Mammary epithelial cell (primary cell): ENCODE measurements at regions of chr13 and their contacts with region 1.

Region 1: DNA sequence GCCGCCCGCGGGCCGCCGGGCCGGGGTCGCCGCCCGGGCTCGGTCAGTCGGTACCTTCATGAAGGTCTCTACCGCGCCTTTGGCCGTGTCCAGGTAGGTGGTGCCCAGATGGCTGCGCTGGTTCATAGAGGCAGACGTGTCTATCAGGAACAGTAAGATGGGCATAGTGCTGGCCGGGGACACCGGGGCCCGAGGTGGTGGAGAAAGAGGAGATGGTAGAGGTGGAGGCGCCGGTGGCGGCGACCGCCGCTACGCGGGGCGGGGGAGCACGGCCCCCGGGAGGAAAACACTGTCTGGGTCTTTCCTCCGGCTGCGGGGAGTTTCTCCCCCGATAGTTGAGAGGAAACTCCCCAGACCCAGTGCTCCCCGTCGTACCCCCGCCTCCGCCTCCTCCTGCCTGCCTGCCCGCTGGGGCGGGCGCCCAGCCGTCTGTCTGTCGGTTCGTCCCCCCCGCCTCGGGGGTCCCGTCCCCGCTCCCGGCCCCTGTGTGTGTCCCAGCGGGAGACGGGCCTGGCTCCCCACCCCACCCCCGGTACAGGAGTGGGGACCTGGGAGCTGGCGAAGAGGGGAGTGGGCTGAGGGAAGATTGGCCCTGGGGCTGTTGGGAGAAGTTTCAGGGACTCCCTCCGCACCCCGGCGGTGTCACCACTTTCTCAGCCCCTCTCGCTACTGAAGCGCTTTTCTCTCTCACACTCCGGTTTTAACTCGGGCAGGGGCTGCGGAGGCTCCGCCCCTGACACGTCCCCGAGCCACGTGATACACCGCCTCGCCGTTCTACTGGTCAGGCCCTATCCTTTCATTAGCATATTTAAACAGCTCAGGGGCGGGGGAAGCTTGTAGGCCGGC is at the start of gene INTS6:
- DNase-seq: peak; percentile 99
- H3K4me3 ChIP-seq: peak within 1 kb of the TSS; percentile 73 to 94 (median 89)
- H3K27ac ChIP-seq: peak within 1 kb of the TSS; percentile 86
- H3K4me1 ChIP-seq: peaks cover 4% of the 10 kb centered on the region
- H3K27me3 ChIP-seq: no peaks in the 10 kb centered on the region
- CTCF ChIP-seq: no peak
- total RNA-seq, gene INTS6: 57.8 to 65.7 TPM

Region 2: GRCh38 chr13:51435002-51435578 is 17.5 kb before region 1 on chr13:
- CTCF ChIA-PET with region 1: no interaction called
- dilution Hi-C with region 1: no loop called
- in situ Hi-C with region 1: no loop called
- intact Hi-C with region 1: loop called (anchors 2 kb)
- DNase-seq: no peak
- H3K4me3 ChIP-seq: no peak overlapping the region
- H3K27ac ChIP-seq: no peak overlapping the region
- H3K4me1 ChIP-seq: no peaks in the 10 kb centered on the region
- H3K27me3 ChIP-seq: no peaks in the 10 kb centered on the region
- CTCF ChIP-seq: peak; percentile 53 to 60

Region 3: DNA sequence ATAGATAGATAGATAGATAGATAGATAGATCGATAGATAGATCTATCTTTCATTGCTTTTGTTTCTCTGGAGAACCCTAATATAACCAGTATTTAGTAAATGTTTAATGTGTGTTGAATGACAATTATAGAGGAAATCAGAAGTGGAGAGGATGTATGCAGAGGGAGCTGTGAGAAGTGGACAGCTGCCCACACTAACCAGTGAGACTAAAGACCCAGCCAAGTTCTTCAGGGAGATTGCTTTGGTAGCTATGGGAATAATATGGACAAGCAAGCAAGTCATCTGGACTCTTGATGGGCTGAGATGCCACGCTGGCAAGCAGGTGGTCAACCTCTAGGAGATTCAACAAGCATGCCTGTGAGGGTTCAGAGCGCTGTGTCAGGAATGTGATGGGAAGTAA is 15.1 kb after region 1 on chr13:
- CTCF ChIA-PET with region 1: no interaction called
- dilution Hi-C with region 1: no loop called
- in situ Hi-C with region 1: no loop called
- intact Hi-C with region 1: no loop called
- DNase-seq: no peak
- H3K4me3 ChIP-seq: no peak overlapping the region
- H3K27ac ChIP-seq: no peak overlapping the region
- H3K4me1 ChIP-seq: no peaks in the 10 kb centered on the region
- H3K27me3 ChIP-seq: no peaks in the 10 kb centered on the region
- CTCF ChIP-seq: no peak

Region 4: GRCh38 chr13:51488212-51488611 is 35.6 kb after region 1 on chr13:
- CTCF ChIA-PET with region 1: no interaction called
- dilution Hi-C with region 1: no loop called
- in situ Hi-C with region 1: no loop called
- intact Hi-C with region 1: no loop called
- DNase-seq: peak; percentile 40
- H3K4me3 ChIP-seq: no peak overlapping the region
- H3K27ac ChIP-seq: no peak overlapping the region
- H3K4me1 ChIP-seq: peaks cover 4% of the 10 kb centered on the region
- H3K27me3 ChIP-seq: no peaks in the 10 kb centered on the region
- CTCF ChIP-seq: no peak

Region 5: DNA sequence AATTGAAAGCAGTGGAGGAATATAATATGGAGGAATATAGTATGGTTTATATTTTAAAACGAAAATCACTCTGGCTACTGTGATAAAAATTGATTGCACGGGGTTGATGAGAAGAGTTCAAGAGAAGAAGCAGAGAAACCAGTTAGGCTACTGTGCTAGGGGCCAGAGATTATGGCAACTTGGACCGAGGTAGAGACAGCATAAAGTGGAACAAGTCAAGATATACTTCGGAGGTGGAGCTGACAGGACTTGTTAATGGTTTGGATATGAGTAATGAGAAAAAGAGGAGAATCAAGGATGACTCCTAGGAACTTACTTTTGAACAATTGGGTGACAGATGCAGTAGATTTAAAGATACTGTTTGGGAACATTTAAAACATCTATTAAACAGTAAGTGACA is 125.1 kb after region 1 on chr13:
- CTCF ChIA-PET with region 1: no interaction called
- dilution Hi-C with region 1: no loop called
- in situ Hi-C with region 1: loop called (anchors 10 kb)
- intact Hi-C with region 1: loop called (anchors 2 kb)
- DNase-seq: peak; percentile 58
- H3K4me3 ChIP-seq: peak overlapping the region in 2 of 3 experiments; percentile 6 to 46
- H3K27ac ChIP-seq: peak overlapping the region; percentile 80
- H3K4me1 ChIP-seq: peaks cover 20% of the 10 kb centered on the region
- H3K27me3 ChIP-seq: no peaks in the 10 kb centered on the region
- CTCF ChIP-seq: no peak

Region 6: GRCh38 chr13:51645154-51645650 is 192.6 kb after region 1 on chr13:
- CTCF ChIA-PET with region 1: no interaction called
- dilution Hi-C with region 1: no loop called
- in situ Hi-C with region 1: no loop called
- intact Hi-C with region 1: loop called (anchors 1 kb)
- DNase-seq: peak; percentile 63
- H3K4me3 ChIP-seq: no peak overlapping the region
- H3K27ac ChIP-seq: peak overlapping the region; percentile 94
- H3K4me1 ChIP-seq: peaks cover 53% of the 10 kb centered on the region
- H3K27me3 ChIP-seq: no peaks in the 10 kb centered on the region
- CTCF ChIP-seq: no peak

Region 7: GRCh38 chr13:51781246-51782022 is 328.9 kb after region 1 on chr13:
- CTCF ChIA-PET with region 1: no interaction called
- dilution Hi-C with region 1: loop called (anchors 25 kb)
- in situ Hi-C with region 1: no loop called
- intact Hi-C with region 1: loop called (anchors 5 kb)
- DNase-seq: peak; percentile 31
- H3K4me3 ChIP-seq: no peak overlapping the region
- H3K27ac ChIP-seq: no peak overlapping the region
- H3K4me1 ChIP-seq: no peaks in the 10 kb centered on the region
- H3K27me3 ChIP-seq: no peaks in the 10 kb centered on the region
- CTCF ChIP-seq: peak; percentile 51 to 69

Region 8: GRCh38 chr13:51844862-51845573 is 392.4 kb after region 1 on chr13 and contains the start of gene TMEM272:
- CTCF ChIA-PET with region 1: no interaction called
- dilution Hi-C with region 1: no loop called
- in situ Hi-C with region 1: no loop called
- intact Hi-C with region 1: no loop called
- DNase-seq: no peak
- H3K4me3 ChIP-seq: no peak within 1 kb of the TSS
- H3K27ac ChIP-seq: no peak within 1 kb of the TSS
- H3K4me1 ChIP-seq: no peaks in the 10 kb centered on the region
- H3K27me3 ChIP-seq: no peaks in the 10 kb centered on the region
- CTCF ChIP-seq: peak; percentile 73 to 75
- total RNA-seq, gene TMEM272: not detected